Activated B cell treated with CpG ODN at 0.5 μM for 24 hours (primary cell): ENCODE measurements at regions of chrX and their contacts with region 1.

Region 1: DNA sequence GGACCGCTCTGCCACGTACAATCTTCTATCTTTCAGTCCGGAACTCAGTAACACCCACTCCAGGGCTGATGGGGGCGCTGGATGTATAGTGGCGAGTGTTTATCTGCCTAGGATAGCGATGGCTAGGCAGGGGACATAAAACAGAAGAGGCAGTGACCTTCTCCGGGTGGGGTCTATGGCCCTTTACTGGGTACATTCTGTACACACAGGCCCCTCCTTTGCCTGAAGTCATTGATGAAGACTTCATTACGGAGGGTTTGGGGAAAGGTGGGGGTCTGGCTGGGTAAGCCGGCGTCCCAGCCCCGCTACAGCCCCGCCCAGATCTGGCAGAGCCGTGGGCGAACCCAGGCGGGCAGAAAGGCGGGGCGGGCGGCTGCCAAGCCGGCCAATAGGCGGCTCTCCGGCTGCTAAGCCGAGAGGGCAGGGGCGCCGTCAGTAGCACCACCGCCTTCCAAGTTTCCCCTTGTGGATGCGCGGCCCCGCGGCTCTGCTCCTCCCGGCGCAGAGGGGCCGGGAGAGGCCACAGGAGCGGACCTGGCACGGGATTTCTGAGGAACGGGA is at the start of gene CHST7:
- DNase-seq: peak; percentile 53
- ATAC-seq: peak; percentile 65
- H3K4me3 Mint-ChIP-seq: peak within 1 kb of the TSS; percentile 85
- H3K27ac Mint-ChIP-seq: peak within 1 kb of the TSS; percentile 91
- H3K4me1 Mint-ChIP-seq: peaks cover 49% of the 10 kb centered on the region
- H3K27me3 Mint-ChIP-seq: no peaks in the 10 kb centered on the region
- CTCF ChIP-seq: no peak
- total RNA-seq, gene CHST7: 6.3 and 7.5 TPM in 2 replicates

Region 2: GRCh38 chrX:46545111-46546005 is 28.1 kb before region 1 on chrX and contains the start of gene ZNF674:
- CTCF ChIA-PET with region 1: no interaction called
- POLR2A ChIA-PET with region 1: interaction called, 7 read pairs
- intact Hi-C with region 1: loop called (anchors 1 kb)
- DNase-seq: peak; percentile 86
- ATAC-seq: peak; percentile 92
- H3K4me3 Mint-ChIP-seq: peak within 1 kb of the TSS; percentile 93
- H3K27ac Mint-ChIP-seq: peak within 1 kb of the TSS; percentile 94
- H3K4me1 Mint-ChIP-seq: peaks cover 30% of the 10 kb centered on the region
- H3K27me3 Mint-ChIP-seq: no peaks in the 10 kb centered on the region
- CTCF ChIP-seq: no peak
- total RNA-seq, gene ZNF674: 1.6 and 2.3 TPM in 2 replicates

Region 3: DNA sequence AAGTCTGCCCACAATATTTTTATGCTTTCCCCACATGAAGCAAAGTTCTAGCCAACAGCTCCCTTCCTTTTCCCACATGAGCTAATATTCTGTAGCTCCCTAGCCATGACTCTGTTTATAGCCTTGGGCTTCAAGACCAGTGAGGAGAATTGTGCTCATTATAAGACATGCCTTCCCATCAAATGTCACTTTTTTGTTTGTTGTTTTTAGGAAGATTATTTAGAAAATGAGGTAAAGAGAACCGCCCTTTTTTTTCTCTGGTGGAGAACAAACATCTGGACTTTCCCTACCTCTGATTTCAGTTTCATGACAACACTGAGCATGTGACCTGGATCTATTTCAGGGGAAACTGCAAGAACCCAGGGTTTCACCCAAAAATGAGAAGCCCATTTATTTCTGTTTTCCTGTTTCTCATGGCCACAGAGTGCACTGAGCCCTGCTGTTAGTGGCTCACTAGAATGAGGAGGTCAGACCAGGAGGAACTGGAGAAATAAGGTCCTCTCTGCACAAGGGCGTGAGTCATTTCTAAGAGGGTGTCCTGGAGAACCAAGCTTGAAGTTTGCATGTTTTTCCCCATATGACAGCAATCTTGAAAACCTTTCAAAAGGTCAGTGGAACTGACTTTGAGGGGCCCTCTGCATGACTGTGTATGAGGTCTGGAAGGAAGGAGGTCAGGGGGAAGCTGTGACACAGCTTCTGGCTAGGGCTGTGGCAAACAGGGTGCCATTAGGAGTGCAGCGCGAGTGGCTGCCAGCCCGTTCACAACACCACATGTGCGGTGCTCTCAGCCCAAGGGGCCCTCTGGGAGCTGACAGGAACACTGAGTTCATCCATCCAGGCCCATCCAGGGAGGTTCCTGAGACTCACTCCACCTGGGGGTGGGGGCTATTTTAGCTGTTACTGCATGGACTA is 55.3 kb after region 1 on chrX:
- CTCF ChIA-PET with region 1: interaction called, 6 read pairs
- POLR2A ChIA-PET with region 1: interaction called, 9 read pairs
- intact Hi-C with region 1: loop called (anchors 5 kb)
- DNase-seq: peak; percentile 16
- ATAC-seq: peak; percentile 78
- H3K4me3 Mint-ChIP-seq: peak overlapping the region; percentile 60
- H3K27ac Mint-ChIP-seq: peak overlapping the region; percentile 90
- H3K4me1 Mint-ChIP-seq: peaks cover 51% of the 10 kb centered on the region
- H3K27me3 Mint-ChIP-seq: no peaks in the 10 kb centered on the region
- CTCF ChIP-seq: no peak

Region 4: DNA sequence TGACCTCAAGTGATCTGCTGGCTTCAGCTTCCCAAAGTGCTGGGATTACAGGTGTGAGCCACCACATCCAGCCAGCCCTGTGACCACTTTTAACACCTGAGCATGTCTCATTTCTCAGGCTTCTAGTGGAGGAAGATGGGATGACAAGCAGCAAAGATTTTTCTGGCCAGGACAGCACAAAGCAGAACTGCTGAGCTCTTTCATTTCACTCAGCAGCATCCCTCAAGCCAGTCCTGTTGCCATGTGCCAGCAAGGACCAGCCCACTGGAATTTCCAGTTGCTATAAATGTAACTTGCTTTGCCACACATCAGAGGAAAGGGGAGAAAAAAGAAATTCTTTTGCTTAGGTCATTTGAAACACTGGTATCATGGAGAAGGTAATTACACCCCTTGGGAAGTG is 109.6 kb after region 1 on chrX:
- CTCF ChIA-PET with region 1: no interaction called
- POLR2A ChIA-PET with region 1: no interaction called
- intact Hi-C with region 1: no loop called
- DNase-seq: no peak
- ATAC-seq: peak; percentile 68
- H3K4me3 Mint-ChIP-seq: no peak overlapping the region
- H3K27ac Mint-ChIP-seq: peak overlapping the region; percentile 50
- H3K4me1 Mint-ChIP-seq: peaks cover 59% of the 10 kb centered on the region
- H3K27me3 Mint-ChIP-seq: no peaks in the 10 kb centered on the region
- CTCF ChIP-seq: no peak

Region 5: DNA sequence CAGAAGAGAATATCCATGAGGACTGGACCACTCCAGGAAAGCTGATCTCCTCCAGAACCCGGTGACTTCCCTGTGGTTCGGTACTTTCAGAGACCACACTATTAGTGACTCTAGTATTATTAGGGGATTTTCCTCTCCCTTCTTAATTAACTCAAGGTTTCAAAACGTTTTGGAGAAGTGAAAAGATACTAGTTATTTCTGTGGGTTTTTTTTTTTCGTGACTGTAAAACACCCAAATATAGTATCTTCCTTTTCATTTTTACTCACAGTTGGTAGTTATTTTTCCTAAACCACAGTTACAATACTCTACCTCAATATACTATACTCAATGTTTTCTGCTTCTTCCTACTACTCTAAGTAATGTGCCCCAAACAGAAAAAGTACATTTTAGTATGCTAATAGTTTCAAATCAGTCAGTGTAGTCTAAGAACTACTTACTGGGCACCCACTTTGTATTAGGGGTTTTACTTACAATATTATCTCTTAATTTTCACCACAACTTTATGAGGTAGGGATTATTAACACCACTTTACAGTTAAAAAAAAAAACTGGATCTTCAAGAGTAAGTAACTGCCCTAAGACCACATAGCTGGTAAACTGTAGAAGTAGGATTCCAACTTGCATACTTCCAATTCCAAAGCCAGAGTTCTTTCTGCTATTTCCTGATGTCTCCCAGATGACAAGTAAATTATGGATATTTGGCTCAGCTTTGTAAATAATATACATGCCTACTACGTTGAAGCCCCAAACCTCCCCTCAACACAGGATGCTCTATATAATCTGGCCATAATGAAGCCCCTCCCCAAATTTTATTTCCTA is 140.5 kb after region 1 on chrX:
- CTCF ChIA-PET with region 1: no interaction called
- POLR2A ChIA-PET with region 1: no interaction called
- intact Hi-C with region 1: loop called (anchors 2 kb)
- DNase-seq: no peak
- ATAC-seq: peak; percentile 60
- H3K4me3 Mint-ChIP-seq: peak overlapping the region; percentile 58
- H3K27ac Mint-ChIP-seq: peak overlapping the region; percentile 86
- H3K4me1 Mint-ChIP-seq: peaks cover 89% of the 10 kb centered on the region
- H3K27me3 Mint-ChIP-seq: no peaks in the 10 kb centered on the region
- CTCF ChIP-seq: no peak

Region 6: DNA sequence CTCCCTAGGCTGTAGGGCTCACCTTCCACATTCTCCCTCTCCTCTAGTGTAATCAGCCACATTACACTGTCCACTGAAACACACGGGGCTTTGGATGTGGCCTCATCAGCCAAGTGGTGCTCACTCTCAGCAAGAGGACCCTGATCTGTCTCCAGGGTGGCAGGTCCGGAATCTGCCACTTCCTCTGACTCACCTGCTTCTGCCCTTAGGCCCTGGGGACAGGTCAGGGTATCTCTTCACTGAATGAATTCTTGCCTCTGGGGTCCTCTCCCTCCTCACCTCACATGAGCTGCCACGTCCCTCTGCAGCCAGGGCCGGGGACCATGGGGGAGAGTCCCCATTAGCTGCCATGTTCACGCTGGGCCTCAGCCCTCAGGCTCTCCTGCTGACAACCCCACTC is 893.7 kb after region 1 on chrX:
- CTCF ChIA-PET with region 1: no interaction called
- POLR2A ChIA-PET with region 1: no interaction called
- intact Hi-C with region 1: no loop called
- DNase-seq: no peak
- ATAC-seq: no peak
- H3K4me3 Mint-ChIP-seq: no peak overlapping the region
- H3K27ac Mint-ChIP-seq: no peak overlapping the region
- H3K4me1 Mint-ChIP-seq: peaks cover 3% of the 10 kb centered on the region
- H3K27me3 Mint-ChIP-seq: no peaks in the 10 kb centered on the region
- CTCF ChIP-seq: no peak